Gastrocnemius medialis (tissue), 4 donors: ENCODE measurements at regions of chr11 and their contacts with region 1.

Region 1: GRCh38 chr11:119474682-119475596 is 52.0 kb upstream of the THY1 start:
- DNase-seq: peak; percentile 43 to 53
- ATAC-seq: peak; percentile 61 to 85
- H3K4me3 ChIP-seq: no peak overlapping the region
- H3K27ac ChIP-seq: no peak overlapping the region
- H3K4me1 ChIP-seq: no peaks in the 10 kb centered on the region
- H3K27me3 ChIP-seq: no peaks in the 10 kb centered on the region
- CTCF ChIP-seq: peak; percentile 51 to 85 (median 83)
- POLR2A ChIP-seq: no peak

Region 2: GRCh38 chr11:119334174-119334930 is 140.6 kb before region 1 on chr11 and contains the start of gene RNF26:
- in situ Hi-C with region 1: loop called in 1 of 4 experiments (anchors 10 kb)
- intact Hi-C with region 1: no loop called
- DNase-seq: peak; percentile 98
- ATAC-seq: peak; percentile 97 to 98
- H3K4me3 ChIP-seq: peak within 1 kb of the TSS; percentile 80 to 99 (median 93)
- H3K27ac ChIP-seq: peak within 1 kb of the TSS; percentile 91 to 98 (median 96)
- H3K4me1 ChIP-seq: peaks cover 32 to 38% of the 10 kb centered on the region in 2 donors
- H3K27me3 ChIP-seq: no peaks in the 10 kb centered on the region
- CTCF ChIP-seq: no peak
- POLR2A ChIP-seq: peak; percentile 85 to 86
- total RNA-seq, gene RNF26: 3.8 to 5.1 (median 4.7) TPM

Region 3: DNA sequence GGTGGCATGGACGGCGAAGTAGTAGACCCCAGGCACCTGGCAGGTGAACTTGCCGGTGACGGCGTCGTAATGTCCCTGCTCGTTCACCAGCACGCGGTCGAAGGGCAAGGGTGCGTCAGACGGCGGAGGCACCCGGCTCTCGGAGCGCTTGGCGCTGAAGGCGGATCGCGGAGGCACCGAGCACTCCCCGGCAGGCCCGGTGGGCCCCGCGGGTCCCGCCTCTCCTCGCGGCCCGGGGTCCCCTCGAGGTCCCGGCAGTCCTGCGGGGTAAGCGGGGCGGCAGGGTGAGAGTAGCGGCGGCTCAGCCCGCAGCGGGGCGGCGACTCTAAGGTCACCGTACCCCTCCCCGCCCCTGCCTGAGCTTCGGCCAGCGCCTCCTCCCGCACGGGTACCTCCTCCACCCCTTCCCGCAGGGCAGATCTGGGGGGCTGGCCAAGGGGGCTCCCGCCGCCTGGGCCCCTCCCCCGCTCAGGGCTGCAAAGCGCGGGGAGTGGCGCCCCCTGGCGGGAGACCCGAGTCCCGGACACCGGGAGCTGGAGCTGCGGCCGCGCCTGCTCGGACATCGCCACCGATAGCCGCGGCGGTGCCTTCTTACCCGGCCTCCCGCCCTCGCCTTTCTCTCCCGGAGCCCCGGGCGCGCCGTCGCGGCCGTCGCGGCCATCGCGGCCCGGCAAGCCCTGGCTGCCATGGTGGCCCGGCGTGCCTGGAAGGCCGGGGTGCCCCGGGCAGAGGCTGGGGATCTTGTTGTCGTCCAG is 135.2 kb before region 1 on chr11:
- in situ Hi-C with region 1: loop called in 1 of 4 experiments (anchors 10 kb)
- intact Hi-C with region 1: loop called (anchors 5 kb)
- DNase-seq: peak in 1 of 2 donors; percentile 55
- ATAC-seq: peak; percentile 58 to 66
- H3K4me3 ChIP-seq: peak overlapping the region; percentile 61 to 73 (median 66)
- H3K27ac ChIP-seq: peak overlapping the region; percentile 72 to 90 (median 82)
- H3K4me1 ChIP-seq: peaks cover 41 to 59% of the 10 kb centered on the region in 2 donors
- H3K27me3 ChIP-seq: peaks cover 5 to 11% (median 8%) of the 10 kb centered on the region in 3 donors
- CTCF ChIP-seq: peak; percentile 89 to 98 (median 96)
- POLR2A ChIP-seq: peak in 1 of 2 donors; percentile 38

Region 4: GRCh38 chr11:119356349-119357031 is 118.4 kb before region 1 on chr11:
- in situ Hi-C with region 1: loop called in 1 of 4 experiments (anchors 10 kb)
- intact Hi-C with region 1: no loop called
- DNase-seq: peak in 1 of 2 donors; percentile 80
- ATAC-seq: peak; percentile 38 to 48
- H3K4me3 ChIP-seq: peak overlapping the region; percentile 42 to 56 (median 48)
- H3K27ac ChIP-seq: peak overlapping the region; percentile 96 to 99 (median 98)
- H3K4me1 ChIP-seq: peaks cover 33 to 34% of the 10 kb centered on the region in 2 donors
- H3K27me3 ChIP-seq: no peaks in the 10 kb centered on the region
- CTCF ChIP-seq: peak; percentile 87 to 99 (median 92)
- POLR2A ChIP-seq: peak in 1 of 2 donors; percentile 27

Region 5: GRCh38 chr11:119381181-119381988 is 93.6 kb before region 1 on chr11 and contains the start of gene USP2:
- in situ Hi-C with region 1: no loop called
- intact Hi-C with region 1: loop called (anchors 2 kb)
- DNase-seq: peak; percentile 98
- ATAC-seq: peak; percentile 69 to 83
- H3K4me3 ChIP-seq: peak within 1 kb of the TSS; percentile 56 to 73 (median 62)
- H3K27ac ChIP-seq: peak within 1 kb of the TSS; percentile 96 to 99 (median 98)
- H3K4me1 ChIP-seq: peaks cover 42 to 45% of the 10 kb centered on the region in 2 donors
- H3K27me3 ChIP-seq: no peaks in the 10 kb centered on the region
- CTCF ChIP-seq: peak; percentile 81 to 97 (median 94)
- POLR2A ChIP-seq: peak; percentile 91 to 93
- total RNA-seq, gene USP2: 19.4 to 105 (median 46.0) TPM

Region 6: GRCh38 chr11:119389611-119390254 is 85.2 kb before region 1 on chr11:
- in situ Hi-C with region 1: loop called in 1 of 4 experiments (anchors 10 kb)
- intact Hi-C with region 1: no loop called
- DNase-seq: no peak
- ATAC-seq: no peak
- H3K4me3 ChIP-seq: no peak overlapping the region
- H3K27ac ChIP-seq: no peak overlapping the region
- H3K4me1 ChIP-seq: no peaks in the 10 kb centered on the region
- H3K27me3 ChIP-seq: no peaks in the 10 kb centered on the region
- CTCF ChIP-seq: no peak
- POLR2A ChIP-seq: no peak